ENCODE measurements at regions of chr3 and their contacts with region 1.

Region 1: DNA sequence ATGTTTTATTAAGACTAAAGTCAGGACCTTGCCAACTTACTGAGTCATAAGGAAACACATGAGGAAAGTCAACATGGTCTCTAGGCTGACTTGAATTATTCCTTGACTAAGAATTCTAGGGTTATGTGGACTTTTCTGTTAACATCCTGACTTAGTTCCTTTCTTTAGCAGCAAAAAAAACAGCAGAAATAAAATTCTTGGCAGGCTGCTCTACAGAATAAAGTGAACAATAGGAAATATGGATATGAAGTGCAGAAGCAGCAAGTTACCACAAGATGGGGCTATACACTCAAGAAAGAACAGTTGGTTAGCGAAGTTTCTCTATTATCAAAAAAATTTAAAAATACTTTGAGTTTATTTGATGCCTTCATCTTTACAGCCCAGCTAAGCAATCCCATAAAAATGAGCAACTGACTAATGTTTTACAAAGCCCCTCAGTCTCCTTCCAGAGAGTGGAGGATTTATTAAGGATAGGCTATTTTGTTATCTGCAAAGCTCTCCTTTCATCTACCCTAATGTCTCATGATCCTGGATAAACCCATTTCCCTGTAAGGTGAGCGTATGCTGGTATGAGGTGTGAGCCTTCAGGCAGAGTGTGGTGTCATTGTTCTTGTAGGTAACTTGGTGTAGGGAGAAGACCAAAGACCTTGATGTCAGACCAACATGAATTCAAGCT is 23.1 kb upstream of the MCCC1 start:
- DNase-seq: no peak
- H3K4me3 ChIP-seq: no peak overlapping the region
- H3K27ac ChIP-seq: no peak overlapping the region
- H3K4me1 ChIP-seq: no peaks in the 10 kb centered on the region
- H3K27me3 ChIP-seq: no peaks in the 10 kb centered on the region
- CTCF ChIP-seq: peak; percentile 46 to 71 (median 53)
- EP300 ChIP-seq: no peak
- POLR2A ChIP-seq: no peak

Region 2: DNA sequence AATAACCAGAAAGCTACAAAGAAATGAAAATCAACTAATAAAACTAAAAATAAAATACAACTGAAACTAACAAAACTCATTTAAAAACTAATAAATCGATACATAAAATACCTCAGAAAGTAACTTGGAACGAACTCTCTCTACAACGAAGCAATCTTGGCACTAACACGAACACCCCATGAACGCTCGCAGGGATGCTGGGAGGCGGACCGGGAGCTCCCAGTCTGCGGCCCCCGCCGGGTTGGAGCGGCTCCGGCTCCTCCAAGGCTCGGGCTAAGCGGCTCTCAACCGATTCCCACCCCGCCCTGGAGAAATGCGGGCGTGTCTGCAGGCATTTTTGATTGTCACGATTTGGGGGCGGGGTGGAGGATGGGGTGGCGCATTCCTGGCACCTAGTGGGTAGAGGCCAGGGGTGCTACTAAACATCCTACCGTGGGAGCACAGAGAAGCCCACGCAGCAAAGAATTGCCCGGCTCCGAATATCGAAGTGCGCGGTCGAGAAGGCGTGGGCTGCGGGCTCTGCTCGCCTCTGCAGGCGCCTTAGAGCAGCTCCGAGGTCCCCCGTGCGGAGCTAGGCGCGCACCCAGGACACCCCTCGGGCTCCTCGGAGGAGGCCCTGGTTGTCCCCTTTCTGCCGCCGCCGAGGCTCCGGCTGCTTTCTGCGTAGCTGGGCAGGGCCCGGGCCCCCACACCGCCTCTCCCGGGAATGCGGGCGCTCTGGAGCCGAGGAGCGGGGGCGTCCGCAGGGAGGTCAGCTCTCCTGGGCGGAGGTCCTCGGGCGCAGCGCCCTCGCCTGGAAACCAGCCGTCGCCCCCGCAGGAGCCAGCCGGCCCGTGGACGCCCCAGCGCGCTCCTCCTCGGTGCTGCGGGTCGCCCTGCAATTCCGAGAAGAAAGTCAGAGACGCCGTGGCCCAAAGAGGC is 56.5 kb after region 1 on chr3:
- intact Hi-C with region 1: loop called in 1 of 4 experiments (anchors 5 kb)
- DNase-seq: peak; percentile 28 to 62 (median 40)
- H3K4me3 ChIP-seq: peak overlapping the region; percentile 39
- H3K27ac ChIP-seq: no peak overlapping the region
- H3K4me1 ChIP-seq: no peaks in the 10 kb centered on the region
- H3K27me3 ChIP-seq: no peaks in the 10 kb centered on the region
- CTCF ChIP-seq: no peak
- EP300 ChIP-seq: no peak
- POLR2A ChIP-seq: no peak

Region 3: GRCh38 chr3:183385698-183386613 is 263.6 kb after region 1 on chr3:
- intact Hi-C with region 1: loop called (anchors 2 to 10 kb)
- DNase-seq: peak in 4 of 5 donors; percentile 26 to 64 (median 31)
- H3K4me3 ChIP-seq: no peak overlapping the region
- H3K27ac ChIP-seq: no peak overlapping the region
- H3K4me1 ChIP-seq: no peaks in the 10 kb centered on the region
- H3K27me3 ChIP-seq: no peaks in the 10 kb centered on the region
- CTCF ChIP-seq: peak; percentile 28 to 56 (median 44)
- EP300 ChIP-seq: no peak
- POLR2A ChIP-seq: no peak

Region 4: DNA sequence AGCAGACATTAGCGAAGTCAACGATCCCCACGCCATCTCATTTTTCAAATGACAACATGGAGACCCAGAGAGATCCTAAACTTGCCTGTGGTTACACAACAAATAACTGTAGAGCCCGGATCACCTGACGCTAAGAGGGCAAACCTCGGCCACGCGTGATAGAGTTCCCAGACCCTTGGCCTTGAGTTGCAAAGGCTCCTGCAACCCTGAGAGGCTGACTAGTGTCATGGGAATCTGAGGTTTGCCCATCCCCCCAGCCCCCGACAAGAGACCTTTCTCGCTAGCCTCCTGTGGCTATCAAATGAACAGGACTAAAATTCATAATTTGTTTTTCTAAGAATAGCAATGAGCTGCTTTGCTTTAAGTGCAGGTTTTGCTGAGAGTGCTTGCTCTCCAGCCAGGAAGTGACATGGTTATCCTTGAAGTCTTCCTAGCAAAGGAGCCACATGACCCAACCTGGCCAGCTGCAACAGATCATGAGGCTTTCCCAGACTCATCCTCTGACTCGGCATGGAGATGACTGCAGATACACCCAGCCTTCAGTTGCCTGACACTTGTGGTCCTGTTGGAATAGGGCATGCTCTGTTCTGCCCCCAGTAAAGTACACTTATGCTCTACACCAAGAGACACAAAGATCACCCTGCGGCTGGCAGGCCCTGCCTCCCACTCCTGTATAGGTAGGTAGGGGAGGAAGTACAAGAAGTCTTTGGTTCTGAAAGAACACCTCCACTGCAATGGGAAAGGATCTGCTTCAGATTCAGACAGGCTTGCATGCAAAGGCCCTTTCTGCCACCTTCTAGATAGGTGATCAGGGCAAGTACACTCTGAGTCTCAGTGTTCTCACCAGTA is 270.0 kb after region 1 on chr3:
- intact Hi-C with region 1: loop called in 2 of 4 experiments (anchors 5 to 10 kb)
- DNase-seq: peak in 2 of 5 donors; percentile 21 to 22
- H3K4me3 ChIP-seq: no peak overlapping the region
- H3K27ac ChIP-seq: no peak overlapping the region
- H3K4me1 ChIP-seq: peaks cover 2% of the 10 kb centered on the region
- H3K27me3 ChIP-seq: no peaks in the 10 kb centered on the region
- CTCF ChIP-seq: no peak
- EP300 ChIP-seq: no peak
- POLR2A ChIP-seq: no peak